CD14-positive monocyte (primary cell): ENCODE measurements at regions of chr12 and their contacts with region 1.

Region 1: DNA sequence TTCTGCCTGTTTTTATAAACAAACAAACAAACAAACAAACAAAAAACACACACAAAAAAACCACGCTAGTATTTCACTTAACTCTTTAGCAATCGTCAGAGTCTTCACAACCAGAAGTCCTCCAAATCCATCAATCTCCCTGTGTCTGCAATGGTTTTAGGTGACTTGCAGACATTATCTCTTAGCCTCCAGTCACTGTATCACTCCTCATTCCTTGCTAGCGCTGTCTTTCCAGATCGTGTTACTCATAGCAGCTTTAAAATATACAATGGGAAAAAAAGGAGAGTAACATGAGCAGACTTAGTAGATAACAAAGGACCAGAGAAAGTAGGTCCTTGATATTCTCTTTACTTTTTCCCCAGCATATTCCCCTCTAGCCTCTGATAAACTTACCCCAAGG is 15.5 kb upstream of the ETNK1 start:
- DNase-seq: no peak
- H3K4me3 ChIP-seq: no peak overlapping the region
- H3K4me3 Mint-ChIP-seq: no peak overlapping the region
- H3K27ac ChIP-seq: no peak overlapping the region
- H3K27ac Mint-ChIP-seq: peak overlapping the region in 1 of 7 donors; percentile 37
- H3K4me1 ChIP-seq: no peaks in the 10 kb centered on the region
- H3K4me1 Mint-ChIP-seq: no peaks in the 10 kb centered on the region
- H3K27me3 ChIP-seq: no peaks in the 10 kb centered on the region
- H3K27me3 Mint-ChIP-seq: peaks cover 0 to 4% (median 1%) of the 10 kb centered on the region in 3 donors
- CTCF ChIP-seq: no peak

Region 2: GRCh38 chr12:22562036-22563028 is 47.2 kb before region 1 on chr12:
- intact Hi-C with region 1: loop called in 1 of 2 experiments (anchors 5 kb)
- DNase-seq: no peak
- H3K4me3 ChIP-seq: no peak overlapping the region
- H3K4me3 Mint-ChIP-seq: no peak overlapping the region
- H3K27ac ChIP-seq: no peak overlapping the region
- H3K27ac Mint-ChIP-seq: no peak overlapping the region
- H3K4me1 ChIP-seq: no peaks in the 10 kb centered on the region
- H3K4me1 Mint-ChIP-seq: no peaks in the 10 kb centered on the region
- H3K27me3 ChIP-seq: no peaks in the 10 kb centered on the region
- H3K27me3 Mint-ChIP-seq: peaks cover 0 to 2% (median 0%) of the 10 kb centered on the region in 3 donors
- CTCF ChIP-seq: no peak